ENCODE measurements at regions of chr11 and their contacts with region 1.

Region 1: DNA sequence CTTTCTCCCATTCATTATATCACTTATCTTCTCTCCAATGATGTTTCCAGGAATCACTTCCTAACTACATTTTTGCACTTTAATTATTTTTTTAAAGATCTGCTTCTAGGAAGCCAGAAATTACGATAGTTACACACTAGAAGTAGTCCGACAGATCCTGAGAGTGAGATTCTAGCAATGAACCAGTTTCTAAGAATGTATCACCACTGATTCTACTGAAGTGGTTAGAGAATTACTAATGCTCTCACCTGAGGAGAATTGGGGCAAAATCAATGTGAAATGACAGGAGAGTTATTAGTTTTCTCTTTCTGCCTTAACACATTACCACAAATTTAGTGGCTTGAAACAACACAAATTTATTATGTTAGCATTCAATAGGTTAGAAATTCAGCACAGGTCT is 241.2 kb downstream of the CASP12 start:
- DNase-seq: no peak
- H3K4me3 Mint-ChIP-seq: no peak overlapping the region
- H3K27ac Mint-ChIP-seq: no peak overlapping the region
- H3K4me1 Mint-ChIP-seq: peaks cover 42% of the 10 kb centered on the region
- H3K27me3 Mint-ChIP-seq: no peaks in the 10 kb centered on the region

Region 2: GRCh38 chr11:104625246-104625645 is 31.8 kb before region 1 on chr11:
- intact Hi-C with region 1: loop called (anchors 2 kb)
- DNase-seq: no peak
- H3K4me3 Mint-ChIP-seq: no peak overlapping the region
- H3K27ac Mint-ChIP-seq: no peak overlapping the region
- H3K4me1 Mint-ChIP-seq: peaks cover 18% of the 10 kb centered on the region
- H3K27me3 Mint-ChIP-seq: no peaks in the 10 kb centered on the region

Region 3: GRCh38 chr11:104645261-104646222 is 11.5 kb before region 1 on chr11:
- intact Hi-C with region 1: no loop called
- DNase-seq: no peak
- H3K4me3 Mint-ChIP-seq: no peak overlapping the region
- H3K27ac Mint-ChIP-seq: no peak overlapping the region
- H3K4me1 Mint-ChIP-seq: peaks cover 8% of the 10 kb centered on the region
- H3K27me3 Mint-ChIP-seq: no peaks in the 10 kb centered on the region

Region 4: DNA sequence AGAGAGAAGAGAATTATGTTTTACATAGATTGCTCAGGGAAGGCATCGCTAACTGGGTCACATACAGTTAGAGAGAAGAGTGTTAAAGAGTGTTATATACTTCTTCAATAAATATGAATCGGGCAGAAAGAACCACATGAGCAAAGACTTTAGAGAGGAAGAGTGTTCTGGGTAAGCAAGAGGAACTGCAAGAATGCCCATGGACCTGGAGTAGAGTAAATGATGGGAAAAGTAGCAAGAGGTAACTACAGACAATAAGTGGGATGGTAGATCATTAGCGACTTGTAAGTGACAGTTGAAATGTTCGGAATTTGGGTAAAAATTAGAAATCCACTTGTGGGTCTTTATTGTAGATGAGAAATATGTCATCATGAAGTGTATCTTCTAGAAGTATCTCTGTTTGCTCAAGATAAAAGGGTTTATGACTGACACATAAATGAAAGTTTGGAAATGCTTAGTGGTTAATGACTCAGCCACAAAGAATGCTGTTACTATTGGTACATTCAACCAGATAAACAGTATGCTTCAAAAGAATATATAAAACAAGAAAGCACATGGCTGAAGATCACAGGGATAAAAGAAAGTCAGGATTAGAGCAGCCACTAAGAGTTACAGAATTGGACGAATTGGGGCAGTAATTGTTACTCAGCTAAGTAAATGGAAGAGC is 11.8 kb after region 1 on chr11:
- intact Hi-C with region 1: loop called (anchors 1 kb)
- DNase-seq: no peak
- H3K4me3 Mint-ChIP-seq: no peak overlapping the region
- H3K27ac Mint-ChIP-seq: no peak overlapping the region
- H3K4me1 Mint-ChIP-seq: peaks cover 21% of the 10 kb centered on the region
- H3K27me3 Mint-ChIP-seq: peaks cover 13% of the 10 kb centered on the region

Measured in activated T-helper 2 cell treated with anti-CD3 and anti-CD28 coated beads, Interferon-gamma antibody, Interleukin-2, Interleukin-4, amounts not matched to agents 10 μg/mL and 5 μg/mL and 100 μg/mL, durations not matched to agents 14 hours and 24 hours and 36 hours (primary cell).